ENCODE measurements at regions of chr4 and their contacts with region 1.

Region 1: GRCh38 chr4:40316782-40317635 is 18.1 kb upstream of the CHRNA9 start:
- DNase-seq: peak in 1 of 2 donors; percentile 34
- ATAC-seq: peak; percentile 78

Region 2: GRCh38 chr4:40032785-40033184 is 284.2 kb before region 1 on chr4:
- intact Hi-C with region 1: no loop called
- DNase-seq: no peak
- ATAC-seq: no peak

Region 3: GRCh38 chr4:40056716-40057585 is 260.1 kb before region 1 on chr4 and contains the start of gene N4BP2:
- intact Hi-C with region 1: loop called in 1 of 2 experiments (anchors 5 kb)
- DNase-seq: peak; percentile 69 to 85
- ATAC-seq: peak; percentile 73
- total RNA-seq, gene N4BP2: 8.5 to 9.3 TPM

Region 4: DNA sequence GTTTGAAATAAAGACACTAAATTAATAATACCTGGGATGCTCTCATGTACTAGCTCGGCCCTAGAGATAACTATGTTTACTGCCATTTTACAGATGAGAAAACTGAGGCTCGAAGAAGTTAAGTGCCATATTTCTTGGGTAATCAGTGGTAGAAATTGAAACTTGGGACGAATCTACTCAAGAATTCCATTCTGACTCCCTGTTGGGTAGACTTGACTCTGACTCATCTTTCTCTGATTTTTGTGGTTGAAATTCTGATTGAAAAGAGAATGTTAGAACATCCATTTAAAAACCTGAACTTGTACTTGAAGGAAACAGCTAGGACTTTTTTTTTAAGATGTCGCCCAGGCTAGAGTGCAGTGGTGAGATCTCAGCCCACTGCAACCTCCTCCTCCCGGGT is 382.6 kb after region 1 on chr4:
- intact Hi-C with region 1: no loop called
- DNase-seq: no peak
- ATAC-seq: no peak